Activated CD4-positive, alpha-beta T cell treated with anti-CD3 and anti-CD28 coated beads, Interleukin-2, amount 10 ng/mL, durations not matched to agents 24 days and 14 days (primary cell): ENCODE measurements at regions of chr1 and their contacts with region 1.

Region 1: GRCh38 chr1:44775078-44775929 is at the start of gene RPS8:
- DNase-seq: peak; percentile 97
- H3K4me3 Mint-ChIP-seq: peak within 1 kb of the TSS; percentile 89
- H3K27ac Mint-ChIP-seq: peak within 1 kb of the TSS; percentile 94
- H3K4me1 Mint-ChIP-seq: peaks cover 31% of the 10 kb centered on the region
- H3K27me3 Mint-ChIP-seq: no peaks in the 10 kb centered on the region
- total RNA-seq, gene RPS8: 2,376 and 2,377 TPM in 2 replicates

Region 2: GRCh38 chr1:44739361-44740178 is 35.7 kb before region 1 on chr1 and contains the start of gene KIF2C:
- intact Hi-C with region 1: loop called (anchors 1 kb)
- DNase-seq: peak; percentile 99
- H3K4me3 Mint-ChIP-seq: peak within 1 kb of the TSS; percentile 96
- H3K27ac Mint-ChIP-seq: peak within 1 kb of the TSS; percentile 97
- H3K4me1 Mint-ChIP-seq: peaks cover 38% of the 10 kb centered on the region
- H3K27me3 Mint-ChIP-seq: no peaks in the 10 kb centered on the region
- total RNA-seq, gene KIF2C: 78.1 and 82.7 TPM in 2 replicates

Region 3: GRCh38 chr1:44786138-44786840 is 11.0 kb after region 1 on chr1:
- intact Hi-C with region 1: loop called (anchors 1 kb)
- DNase-seq: peak; percentile 93
- H3K4me3 Mint-ChIP-seq: peak overlapping the region; percentile 83
- H3K27ac Mint-ChIP-seq: peak overlapping the region; percentile 85
- H3K4me1 Mint-ChIP-seq: peaks cover 28% of the 10 kb centered on the region
- H3K27me3 Mint-ChIP-seq: no peaks in the 10 kb centered on the region

Region 4: GRCh38 chr1:44807262-44808062 is 32.2 kb after region 1 on chr1 and contains the start of gene DYNLT4:
- intact Hi-C with region 1: loop called (anchors 5 kb)
- DNase-seq: peak; percentile 96
- H3K4me3 Mint-ChIP-seq: peak within 1 kb of the TSS; percentile 81
- H3K27ac Mint-ChIP-seq: peak within 1 kb of the TSS; percentile 99
- H3K4me1 Mint-ChIP-seq: peaks cover 81% of the 10 kb centered on the region
- H3K27me3 Mint-ChIP-seq: peaks cover 2% of the 10 kb centered on the region
- total RNA-seq, gene DYNLT4: 0.28 TPM in 1 of 2 replicates, not detected in the other